ENCODE measurements at regions of chr7 and their contacts with region 1.

Region 1: GRCh38 chr7:112898432-112899290 is 108.5 kb upstream of the TMEM168 start:
- DNase-seq: peak; percentile 15 to 62
- H3K4me3 ChIP-seq: no peak overlapping the region
- H3K27ac ChIP-seq: no peak overlapping the region; the same call in 1 of the 2 replicates
- H3K4me1 ChIP-seq: no peaks in the 10 kb centered on the region
- H3K27me3 ChIP-seq: no peaks in the 10 kb centered on the region
- CTCF ChIP-seq: peak in 2 of 3 experiments; percentile 80 to 86; a peak in 3 of 4 replicates
- EP300 ChIP-seq: no peak
- POLR2A ChIP-seq: no peak
- RAD21 ChIP-seq: peak; percentile 94 to 96

Region 2: GRCh38 chr7:112550468-112551060 is 348.1 kb before region 1 on chr7:
- CTCF ChIA-PET with region 1: interaction called, 10 read pairs
- POLR2A ChIA-PET with region 1: no interaction called
- DNase-seq: no peak
- H3K4me3 ChIP-seq: no peak overlapping the region
- H3K27ac ChIP-seq: no peak overlapping the region
- H3K4me1 ChIP-seq: no peaks in the 10 kb centered on the region
- H3K27me3 ChIP-seq: no peaks in the 10 kb centered on the region
- CTCF ChIP-seq: peak in 2 of 3 experiments; percentile 70 to 86; a peak in 3 of 4 replicates
- EP300 ChIP-seq: no peak
- POLR2A ChIP-seq: no peak
- RAD21 ChIP-seq: peak; percentile 96

Region 3: DNA sequence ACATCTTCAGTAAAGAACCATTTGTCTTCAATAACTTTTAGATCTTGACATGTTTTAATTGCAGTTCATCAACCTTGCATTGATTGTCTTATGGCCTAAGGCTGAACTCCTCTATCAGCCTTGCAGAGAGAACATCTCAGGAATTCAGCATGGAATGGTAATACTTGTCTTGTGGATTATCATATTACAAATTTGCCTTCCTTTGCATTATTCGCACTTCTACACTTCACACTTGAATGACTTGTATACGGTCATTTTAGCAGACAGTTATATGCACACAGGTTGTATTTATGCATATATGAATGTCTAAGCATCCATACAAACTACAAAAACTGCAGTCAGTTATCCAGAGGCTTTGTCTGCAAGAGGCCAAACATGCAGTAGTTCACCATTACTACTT is 156.3 kb after region 1 on chr7:
- CTCF ChIA-PET with region 1: no interaction called
- POLR2A ChIA-PET with region 1: no interaction called
- DNase-seq: no peak
- H3K4me3 ChIP-seq: no peak overlapping the region
- H3K27ac ChIP-seq: no peak overlapping the region
- H3K4me1 ChIP-seq: no peaks in the 10 kb centered on the region
- H3K27me3 ChIP-seq: no peaks in the 10 kb centered on the region
- CTCF ChIP-seq: no peak
- EP300 ChIP-seq: no peak
- POLR2A ChIP-seq: no peak
- RAD21 ChIP-seq: no peak